ENCODE measurements at regions of chr7 and their contacts with region 1.

Region 1: GRCh38 chr7:23181684-23182553 is at the start of gene NUP42:
- H3K4me3 Mint-ChIP-seq: peak within 1 kb of the TSS; percentile 80
- H3K27ac Mint-ChIP-seq: peak within 1 kb of the TSS; percentile 91
- H3K4me1 Mint-ChIP-seq: peaks cover 21% of the 10 kb centered on the region
- H3K27me3 Mint-ChIP-seq: peaks cover 7% of the 10 kb centered on the region

Region 2: DNA sequence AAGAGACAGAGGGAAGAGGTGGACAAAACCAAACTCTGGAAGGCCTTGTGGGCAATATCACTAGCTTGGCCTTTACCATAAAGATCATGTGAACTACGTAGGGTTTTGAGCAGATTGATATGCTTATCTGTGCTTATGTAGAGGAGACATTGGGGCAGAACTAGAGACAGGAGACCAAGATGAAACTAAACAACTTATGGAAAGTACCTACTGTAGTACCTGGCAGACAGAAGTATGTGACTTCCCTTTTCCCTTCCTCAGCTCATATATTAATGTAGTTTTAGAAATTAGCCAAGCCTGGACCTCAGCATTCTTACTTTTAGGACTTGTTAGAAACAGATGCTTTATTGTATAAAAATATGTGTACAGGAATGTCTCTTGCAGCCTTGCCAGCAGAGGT is 468.9 kb before region 1 on chr7:
- intact Hi-C with region 1: no loop called
- H3K4me3 Mint-ChIP-seq: no peak overlapping the region
- H3K27ac Mint-ChIP-seq: no peak overlapping the region
- H3K4me1 Mint-ChIP-seq: peaks cover 16% of the 10 kb centered on the region
- H3K27me3 Mint-ChIP-seq: peaks cover 9% of the 10 kb centered on the region

Region 3: GRCh38 chr7:23013715-23014649 is 167.9 kb before region 1 on chr7 and contains the start of gene HYCC1:
- intact Hi-C with region 1: loop called (anchors 5 kb)
- H3K4me3 Mint-ChIP-seq: peak within 1 kb of the TSS; percentile 91
- H3K27ac Mint-ChIP-seq: no peak within 1 kb of the TSS
- H3K4me1 Mint-ChIP-seq: peaks cover 41% of the 10 kb centered on the region
- H3K27me3 Mint-ChIP-seq: no peaks in the 10 kb centered on the region

Region 4: GRCh38 chr7:23247603-23248335 is 65.8 kb after region 1 on chr7:
- intact Hi-C with region 1: loop called (anchors 5 kb)
- H3K4me3 Mint-ChIP-seq: peak overlapping the region; percentile 82
- H3K27ac Mint-ChIP-seq: peak overlapping the region; percentile 95
- H3K4me1 Mint-ChIP-seq: peaks cover 42% of the 10 kb centered on the region
- H3K27me3 Mint-ChIP-seq: peaks cover 11% of the 10 kb centered on the region

Region 5: DNA sequence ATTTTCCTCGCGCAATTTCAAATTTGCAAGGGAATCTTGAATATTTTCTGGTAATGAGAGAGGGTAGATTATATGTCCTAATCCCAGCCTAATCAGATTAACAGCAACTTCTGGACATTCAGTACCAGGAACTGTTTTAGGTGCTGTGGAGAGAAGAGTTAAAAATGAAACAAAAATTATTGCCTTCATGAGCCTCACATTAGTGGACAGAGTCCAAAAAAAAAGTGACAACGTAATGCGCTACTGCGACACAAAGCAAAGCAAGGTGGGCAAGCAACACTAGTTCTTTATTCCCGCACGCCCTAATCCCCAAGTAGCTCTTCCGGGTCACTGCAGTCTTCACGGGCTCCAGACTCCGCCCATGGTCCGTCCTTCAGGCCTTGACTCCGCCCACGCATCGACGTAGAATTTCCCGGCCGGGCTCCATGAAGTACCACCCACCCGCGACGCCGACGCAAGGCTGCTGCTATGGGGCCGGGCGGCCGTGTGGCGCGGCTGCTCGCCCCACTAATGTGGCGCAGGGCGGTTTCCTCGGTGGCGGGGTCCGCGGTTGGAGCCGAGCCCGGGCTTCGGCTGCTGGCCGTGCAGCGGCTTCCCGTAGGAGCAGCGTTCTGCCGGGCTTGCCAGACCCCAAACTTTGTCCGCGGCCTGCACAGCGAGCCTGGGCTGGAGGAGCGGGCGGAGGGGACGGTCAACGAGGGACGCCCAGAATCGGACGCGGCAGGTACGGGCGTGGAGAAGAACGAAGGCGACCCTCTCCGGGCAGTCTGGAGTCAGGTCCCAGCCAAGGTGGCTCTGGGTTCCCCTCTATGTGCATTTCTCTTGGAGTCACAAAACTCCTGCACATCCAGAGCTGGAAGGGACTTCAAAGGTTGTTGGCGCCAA is 117.2 kb after region 1 on chr7 and contains the start of gene MALSU1:
- intact Hi-C with region 1: loop called (anchors 1 kb)
- H3K4me3 Mint-ChIP-seq: peak within 1 kb of the TSS; percentile 89
- H3K27ac Mint-ChIP-seq: peak within 1 kb of the TSS; percentile 93
- H3K4me1 Mint-ChIP-seq: peaks cover 33% of the 10 kb centered on the region
- H3K27me3 Mint-ChIP-seq: no peaks in the 10 kb centered on the region

Region 6: GRCh38 chr7:23531794-23532489 is 350.0 kb after region 1 on chr7 and contains the start of gene TRA2A:
- intact Hi-C with region 1: loop called (anchors 5 kb)
- H3K4me3 Mint-ChIP-seq: peak within 1 kb of the TSS; percentile 99
- H3K27ac Mint-ChIP-seq: peak within 1 kb of the TSS; percentile 97
- H3K4me1 Mint-ChIP-seq: peaks cover 38% of the 10 kb centered on the region
- H3K27me3 Mint-ChIP-seq: no peaks in the 10 kb centered on the region